ENCODE measurements at regions of chrX and their contacts with region 1.

Region 1: DNA sequence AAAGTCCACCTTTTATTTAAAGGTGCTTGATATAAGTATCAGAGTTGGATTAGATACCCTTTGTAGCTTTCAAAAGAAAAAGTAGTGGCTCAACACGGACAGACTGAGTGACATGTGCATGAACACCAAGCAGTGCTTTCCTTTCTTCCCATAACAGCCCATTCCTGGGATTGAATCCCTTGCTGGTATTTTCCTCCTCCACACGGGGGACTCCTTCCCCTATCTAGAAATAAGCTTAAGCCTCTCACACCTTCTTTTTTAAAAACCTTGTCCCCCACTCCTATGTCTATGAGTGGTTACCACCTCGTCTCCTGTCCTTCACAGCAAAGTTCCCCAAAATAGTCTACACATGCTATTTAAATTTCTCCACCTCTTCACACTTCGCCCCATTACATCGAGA is 5.1 kb downstream of the AP1S2 start:
- DNase-seq: no peak
- ATAC-seq: no peak
- H3K4me3 ChIP-seq: no peak overlapping the region
- H3K27ac ChIP-seq: no peak overlapping the region
- H3K4me1 ChIP-seq: no peaks in the 10 kb centered on the region
- H3K27me3 ChIP-seq: no peaks in the 10 kb centered on the region
- CTCF ChIP-seq: peak in 2 of 3 experiments; percentile 32 to 34; a peak in 2 of 6 replicates
- EP300 ChIP-seq: no peak
- POLR2A ChIP-seq: no peak
- RAD21 ChIP-seq: peak; percentile 42

Region 2: GRCh38 chrX:15686818-15687685 is 162.5 kb before region 1 on chrX:
- CTCF ChIA-PET with region 1: no interaction called
- POLR2A ChIA-PET with region 1: no interaction called
- RAD21 ChIA-PET with region 1: interaction called, 3 read pairs
- SMC1A ChIA-PET with region 1: interaction called, 4 read pairs
- in situ Hi-C with region 1: no loop called
- intact Hi-C with region 1: loop called (anchors 10 kb)
- DNase-seq: peak; percentile 34
- ATAC-seq: peak; percentile 97
- H3K4me3 ChIP-seq: no peak overlapping the region
- H3K27ac ChIP-seq: no peak overlapping the region
- H3K4me1 ChIP-seq: no peaks in the 10 kb centered on the region
- H3K27me3 ChIP-seq: no peaks in the 10 kb centered on the region
- CTCF ChIP-seq: peak; percentile 85
- EP300 ChIP-seq: no peak
- POLR2A ChIP-seq: no peak
- RAD21 ChIP-seq: peak; percentile 74

Region 3: DNA sequence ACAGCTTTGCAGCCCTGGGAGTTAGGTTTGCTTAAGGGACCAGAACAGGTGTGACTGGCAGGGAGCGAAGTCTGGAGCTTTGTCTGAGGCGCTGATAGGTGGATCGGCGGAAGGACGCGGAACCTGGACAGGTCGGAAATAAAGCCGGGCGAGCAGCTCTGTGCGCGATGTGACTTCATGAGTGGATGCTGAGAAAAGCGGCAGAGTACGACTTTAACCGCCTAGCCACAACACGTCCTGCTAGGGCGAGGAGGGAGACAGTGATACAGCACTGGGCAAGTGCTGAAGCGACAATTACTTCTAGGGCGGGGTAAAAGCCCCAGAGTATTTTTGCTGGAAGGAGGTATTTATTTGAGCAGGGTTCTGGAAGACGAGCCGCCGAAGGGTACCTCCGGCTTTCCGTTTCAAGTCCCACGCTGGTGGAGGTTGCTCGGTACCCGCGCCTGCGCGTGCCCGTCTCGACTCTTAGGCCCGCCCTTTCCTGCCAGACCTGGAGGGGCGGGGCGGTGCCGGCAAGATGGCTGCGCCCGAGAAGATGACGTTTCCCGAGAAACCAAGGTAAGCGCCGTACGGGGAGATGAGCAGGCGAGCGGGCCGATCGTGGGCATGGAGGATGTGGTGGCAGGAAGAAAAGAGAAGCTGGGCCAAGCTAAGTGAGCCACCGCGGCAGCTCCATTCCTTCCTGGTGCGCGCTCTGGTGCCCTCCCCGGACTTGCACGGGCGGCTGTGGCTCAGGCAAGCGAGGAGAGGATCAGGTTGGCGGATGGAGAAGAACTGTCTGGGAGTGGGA is 59.4 kb before region 1 on chrX and contains the start of gene ZRSR2:
- CTCF ChIA-PET with region 1: interaction called, 8 read pairs
- POLR2A ChIA-PET with region 1: interaction called, 18 read pairs
- RAD21 ChIA-PET with region 1: interaction called, 4 read pairs
- SMC1A ChIA-PET with region 1: interaction called, 16 read pairs
- in situ Hi-C with region 1: no loop called
- intact Hi-C with region 1: loop called (anchors 2 kb)
- DNase-seq: peak; percentile 58
- ATAC-seq: peak; percentile 96
- H3K4me3 ChIP-seq: peak within 1 kb of the TSS; percentile 71
- H3K27ac ChIP-seq: peak within 1 kb of the TSS; percentile 68
- H3K4me1 ChIP-seq: no peaks in the 10 kb centered on the region
- H3K27me3 ChIP-seq: no peaks in the 10 kb centered on the region
- CTCF ChIP-seq: no peak
- EP300 ChIP-seq: no peak
- POLR2A ChIP-seq: peak; percentile 88
- RAD21 ChIP-seq: no peak
- polyA plus RNA-seq, gene ZRSR2: 10.5 to 14.0 TPM

Region 4: GRCh38 chrX:15860921-15861320 is 11.4 kb after region 1 on chrX:
- CTCF ChIA-PET with region 1: interaction called, 3 read pairs
- POLR2A ChIA-PET with region 1: interaction called, 3 read pairs
- RAD21 ChIA-PET with region 1: interaction called, 4 read pairs
- SMC1A ChIA-PET with region 1: interaction called, 12 read pairs
- in situ Hi-C with region 1: no loop called
- intact Hi-C with region 1: no loop called
- DNase-seq: no peak
- ATAC-seq: no peak
- H3K4me3 ChIP-seq: no peak overlapping the region
- H3K27ac ChIP-seq: no peak overlapping the region
- H3K4me1 ChIP-seq: 0 out of 2 replicates have a peak, but pooled peaks cover 3% of the 10 kb centered on the region
- H3K27me3 ChIP-seq: no peaks in the 10 kb centered on the region; a peak in 1 of 4 replicates
- CTCF ChIP-seq: no peak
- EP300 ChIP-seq: no peak
- POLR2A ChIP-seq: no peak
- RAD21 ChIP-seq: no peak

Region 5: DNA sequence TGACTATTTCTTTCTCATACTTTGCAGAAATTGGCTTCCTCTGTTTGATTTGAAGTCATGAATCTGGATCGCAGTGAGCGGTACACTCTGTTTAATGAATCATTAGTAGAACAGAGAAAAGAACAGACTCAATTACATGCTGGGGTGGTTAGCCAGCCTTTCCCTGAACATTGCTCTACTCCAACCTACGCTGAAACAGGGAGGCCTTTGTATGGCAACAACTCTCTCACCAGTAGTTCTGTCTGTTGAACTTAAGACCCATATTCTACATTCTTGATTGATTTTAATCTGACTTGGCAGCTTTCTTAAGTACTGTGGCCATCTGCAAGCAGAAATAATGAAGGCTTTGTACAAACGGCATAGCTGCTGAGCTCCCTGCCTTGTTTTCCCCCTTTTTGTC is 24.0 kb after region 1 on chrX:
- CTCF ChIA-PET with region 1: no interaction called
- POLR2A ChIA-PET with region 1: no interaction called
- RAD21 ChIA-PET with region 1: no interaction called
- SMC1A ChIA-PET with region 1: no interaction called
- in situ Hi-C with region 1: no loop called
- intact Hi-C with region 1: no loop called
- DNase-seq: no peak
- ATAC-seq: no peak
- H3K4me3 ChIP-seq: no peak overlapping the region
- H3K27ac ChIP-seq: no peak overlapping the region
- H3K4me1 ChIP-seq: no peaks in the 10 kb centered on the region
- H3K27me3 ChIP-seq: no peaks in the 10 kb centered on the region; a peak in 2 of 4 replicates
- CTCF ChIP-seq: no peak
- EP300 ChIP-seq: no peak
- POLR2A ChIP-seq: no peak
- RAD21 ChIP-seq: no peak

Region 6: DNA sequence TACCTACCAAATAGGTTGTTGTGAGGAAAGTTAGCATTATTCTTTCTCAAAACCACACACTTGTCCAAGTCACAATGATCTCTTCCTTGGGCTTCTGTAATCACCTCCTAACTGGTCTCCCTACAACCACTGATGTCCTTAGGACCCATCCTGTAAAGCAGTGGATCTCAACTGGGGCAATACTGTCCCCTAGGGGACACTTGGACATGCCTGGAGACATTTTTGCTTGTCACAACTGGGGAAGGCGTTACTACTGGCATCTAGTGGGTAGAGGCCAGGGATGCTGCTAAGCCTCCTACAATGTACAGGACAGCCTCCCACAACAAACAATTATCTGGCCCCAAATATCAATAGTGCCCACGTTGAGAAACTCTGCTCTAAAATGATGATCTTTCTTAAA is 123.7 kb after region 1 on chrX:
- CTCF ChIA-PET with region 1: interaction called, 40 read pairs
- POLR2A ChIA-PET with region 1: interaction called, 5 read pairs
- RAD21 ChIA-PET with region 1: interaction called, 34 read pairs
- SMC1A ChIA-PET with region 1: interaction called, 33 read pairs
- in situ Hi-C with region 1: no loop called
- intact Hi-C with region 1: loop called (anchors 2 kb)
- DNase-seq: peak; percentile 26
- ATAC-seq: peak; percentile 98
- H3K4me3 ChIP-seq: no peak overlapping the region
- H3K27ac ChIP-seq: no peak overlapping the region
- H3K4me1 ChIP-seq: no peaks in the 10 kb centered on the region; the same call in 1 of the 2 replicates
- H3K27me3 ChIP-seq: no peaks in the 10 kb centered on the region
- CTCF ChIP-seq: peak; percentile 71 to 81 (median 79)
- EP300 ChIP-seq: no peak
- POLR2A ChIP-seq: no peak
- RAD21 ChIP-seq: peak; percentile 86

Region 7: GRCh38 chrX:16212436-16212835 is 362.9 kb after region 1 on chrX:
- CTCF ChIA-PET with region 1: interaction called, 18 read pairs
- POLR2A ChIA-PET with region 1: no interaction called
- RAD21 ChIA-PET with region 1: interaction called, 3 read pairs
- SMC1A ChIA-PET with region 1: interaction called, 11 read pairs
- in situ Hi-C with region 1: no loop called
- intact Hi-C with region 1: loop called (anchors 10 kb)
- DNase-seq: no peak
- ATAC-seq: peak; percentile 84
- H3K4me3 ChIP-seq: no peak overlapping the region
- H3K27ac ChIP-seq: no peak overlapping the region
- H3K4me1 ChIP-seq: no peaks in the 10 kb centered on the region
- H3K27me3 ChIP-seq: no peaks in the 10 kb centered on the region
- CTCF ChIP-seq: peak; percentile 39 to 48 (median 45); a peak in 4 of 6 replicates
- EP300 ChIP-seq: no peak
- POLR2A ChIP-seq: no peak
- RAD21 ChIP-seq: peak; percentile 63

Measured in GM12878 (cell line).